ENCODE measurements at regions of chr7 and their contacts with region 1.

Region 1: GRCh38 chr7:106176414-106177299 is 64.5 kb upstream of the SYPL1 start:
- DNase-seq: peak; percentile 74
- ATAC-seq: peak; percentile 69
- H3K4me3 ChIP-seq: no peak overlapping the region
- H3K4me3 Mint-ChIP-seq: no peak overlapping the region
- H3K27ac ChIP-seq: no peak overlapping the region
- H3K27ac Mint-ChIP-seq: no peak overlapping the region
- H3K4me1 ChIP-seq: peaks cover 5 to 13% of the 10 kb centered on the region in 2 donors
- H3K4me1 Mint-ChIP-seq: peaks cover 11% of the 10 kb centered on the region
- H3K27me3 ChIP-seq: peaks cover 0 to 6% (median 5%) of the 10 kb centered on the region in 4 experiments
- H3K27me3 Mint-ChIP-seq: peaks cover 13% of the 10 kb centered on the region
- CTCF ChIP-seq: peak; percentile 96

Region 2: DNA sequence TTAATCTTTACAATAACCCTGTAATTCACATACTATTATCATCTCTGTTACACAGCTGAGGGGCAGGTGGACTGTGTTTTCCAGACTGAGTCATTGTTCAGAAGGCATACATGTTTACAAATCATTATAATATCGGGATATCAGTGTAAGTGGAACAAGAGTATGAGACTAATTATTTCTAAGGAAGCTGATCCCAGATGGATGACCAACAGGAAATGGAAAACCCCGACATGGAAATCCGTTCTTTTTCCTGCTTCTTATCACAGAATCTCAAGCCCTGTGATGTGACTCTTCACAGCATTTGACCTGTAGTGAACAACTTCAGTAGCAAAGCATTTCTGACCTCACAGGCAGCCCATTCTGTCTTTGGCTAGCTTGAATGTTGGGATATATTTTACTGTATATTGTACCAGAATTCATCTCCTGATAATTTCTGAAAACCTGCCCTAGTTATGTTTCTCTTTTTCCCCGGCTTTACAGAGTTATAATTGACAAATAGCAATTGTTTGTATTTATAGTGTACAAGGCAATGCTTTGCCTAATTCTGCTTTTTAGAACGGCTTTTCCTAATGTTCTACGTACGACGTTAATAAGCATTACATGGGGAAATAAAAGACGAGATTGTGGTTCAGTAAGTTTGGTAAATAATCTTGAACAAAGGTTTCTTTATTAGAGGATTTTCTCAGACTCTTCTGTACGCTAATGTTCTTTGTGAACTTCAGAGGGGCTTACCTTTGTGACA is 14.1 kb after region 1 on chr7:
- CTCF ChIA-PET with region 1: interaction called, 11 read pairs
- POLR2A ChIA-PET with region 1: no interaction called
- intact Hi-C with region 1: no loop called
- DNase-seq: no peak
- ATAC-seq: no peak
- H3K4me3 ChIP-seq: no peak overlapping the region
- H3K4me3 Mint-ChIP-seq: no peak overlapping the region
- H3K27ac ChIP-seq: no peak overlapping the region
- H3K27ac Mint-ChIP-seq: no peak overlapping the region
- H3K4me1 ChIP-seq: no peaks in the 10 kb centered on the region
- H3K4me1 Mint-ChIP-seq: no peaks in the 10 kb centered on the region
- H3K27me3 ChIP-seq: peaks cover 0 to 9% (median 3%) of the 10 kb centered on the region in 4 experiments
- H3K27me3 Mint-ChIP-seq: peaks cover 36% of the 10 kb centered on the region
- CTCF ChIP-seq: no peak

Region 3: GRCh38 chr7:106367018-106367420 is 190.4 kb after region 1 on chr7:
- CTCF ChIA-PET with region 1: interaction called, 5 read pairs
- POLR2A ChIA-PET with region 1: no interaction called
- intact Hi-C with region 1: loop called (anchors 1 kb)
- DNase-seq: peak; percentile 21
- ATAC-seq: peak; percentile 33
- H3K4me3 ChIP-seq: no peak overlapping the region
- H3K4me3 Mint-ChIP-seq: no peak overlapping the region
- H3K27ac ChIP-seq: no peak overlapping the region
- H3K27ac Mint-ChIP-seq: no peak overlapping the region
- H3K4me1 ChIP-seq: no peaks in the 10 kb centered on the region
- H3K4me1 Mint-ChIP-seq: no peaks in the 10 kb centered on the region
- H3K27me3 ChIP-seq: peaks cover 0 to 3% (median 1%) of the 10 kb centered on the region in 4 experiments
- H3K27me3 Mint-ChIP-seq: peaks cover 8% of the 10 kb centered on the region
- CTCF ChIP-seq: peak; percentile 37

Region 4: DNA sequence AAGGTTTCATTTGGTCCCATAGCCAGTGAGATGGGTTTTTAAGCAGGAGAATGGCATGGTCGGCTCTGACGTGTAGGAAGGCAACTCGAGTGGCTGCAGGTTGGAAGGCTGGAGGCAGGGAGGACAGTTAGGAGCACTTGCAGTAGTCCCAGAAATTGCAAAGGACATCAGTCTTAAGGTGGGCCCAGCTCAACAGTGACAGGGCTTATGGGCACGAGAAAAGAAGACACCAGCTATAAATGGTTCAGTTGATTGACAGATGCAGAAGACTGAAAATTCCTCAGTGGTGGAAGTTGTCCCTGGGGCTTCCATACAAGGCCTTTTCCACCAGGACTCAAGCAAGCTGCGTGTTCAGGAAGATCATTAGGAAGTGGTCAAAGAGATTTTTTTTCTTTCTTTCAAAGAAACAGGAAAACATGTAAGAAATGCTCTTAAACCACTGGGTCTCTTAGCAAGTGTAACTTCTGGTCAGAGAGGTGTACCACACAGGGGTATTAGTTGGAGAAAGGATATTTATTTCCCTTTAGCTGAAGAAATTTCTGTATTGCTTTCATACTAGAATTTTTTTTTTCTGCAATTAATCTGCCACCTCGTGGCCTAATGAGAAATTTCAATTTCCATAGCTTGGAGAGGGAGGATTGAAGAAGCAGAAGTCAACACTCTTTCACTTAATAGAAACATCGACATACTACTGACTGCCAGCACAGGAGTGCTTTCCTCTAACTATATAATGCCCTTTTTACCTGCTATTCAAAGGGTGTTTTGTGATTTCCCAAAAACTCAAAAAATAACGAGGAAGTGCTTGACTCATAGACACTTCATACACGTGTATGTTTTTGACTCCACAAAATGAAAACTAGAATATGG is 285.6 kb after region 1 on chr7:
- CTCF ChIA-PET with region 1: interaction called, 310 read pairs
- POLR2A ChIA-PET with region 1: interaction called, 9 read pairs
- intact Hi-C with region 1: no loop called
- DNase-seq: peak; percentile 58
- ATAC-seq: peak; percentile 49
- H3K4me3 ChIP-seq: no peak overlapping the region
- H3K4me3 Mint-ChIP-seq: no peak overlapping the region
- H3K27ac ChIP-seq: no peak overlapping the region
- H3K27ac Mint-ChIP-seq: no peak overlapping the region
- H3K4me1 ChIP-seq: peaks cover 11 to 23% of the 10 kb centered on the region in 2 donors
- H3K4me1 Mint-ChIP-seq: peaks cover 15% of the 10 kb centered on the region
- H3K27me3 ChIP-seq: no peaks in the 10 kb centered on the region
- H3K27me3 Mint-ChIP-seq: no peaks in the 10 kb centered on the region
- CTCF ChIP-seq: peak; percentile 70

Region 5: DNA sequence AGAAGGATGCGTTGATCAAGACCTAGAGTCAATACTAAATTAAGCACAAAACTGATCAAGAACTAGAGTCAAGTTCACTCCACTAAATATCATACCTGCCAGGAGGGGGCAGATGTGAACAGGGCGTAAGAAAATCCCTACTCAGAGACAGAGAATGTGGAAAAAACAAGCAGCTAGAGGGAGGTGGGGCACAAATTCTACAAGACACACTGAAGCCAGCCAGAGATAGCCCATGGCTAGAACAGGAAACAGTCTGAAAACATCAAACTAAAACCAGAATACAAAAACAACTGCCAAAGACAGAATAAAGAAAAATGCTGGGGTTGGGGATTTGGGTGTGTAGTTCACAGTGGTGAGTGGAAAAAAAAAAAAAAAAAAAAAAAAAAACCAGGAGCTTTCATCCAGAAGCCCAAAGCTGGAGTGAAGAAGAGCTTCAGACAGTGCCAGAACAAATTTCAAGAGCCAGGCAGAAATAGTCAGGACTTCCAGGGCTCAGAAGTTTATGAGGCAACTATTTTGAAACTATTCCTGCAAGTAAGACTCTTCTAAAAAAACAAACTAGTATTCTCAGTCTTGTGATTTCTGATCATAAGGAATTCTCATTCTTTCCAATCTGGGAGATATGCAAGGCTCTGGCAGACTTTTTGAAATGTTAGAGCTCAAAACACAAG is 366.0 kb after region 1 on chr7:
- CTCF ChIA-PET with region 1: interaction called, 8 read pairs
- POLR2A ChIA-PET with region 1: no interaction called
- intact Hi-C with region 1: loop called (anchors 2 kb)
- DNase-seq: peak; percentile 71
- ATAC-seq: peak; percentile 84
- H3K4me3 ChIP-seq: no peak overlapping the region
- H3K4me3 Mint-ChIP-seq: no peak overlapping the region
- H3K27ac ChIP-seq: no peak overlapping the region
- H3K27ac Mint-ChIP-seq: no peak overlapping the region
- H3K4me1 ChIP-seq: peaks cover 0 to 3% of the 10 kb centered on the region in 2 donors
- H3K4me1 Mint-ChIP-seq: peaks cover 4% of the 10 kb centered on the region
- H3K27me3 ChIP-seq: no peaks in the 10 kb centered on the region
- H3K27me3 Mint-ChIP-seq: peaks cover 3% of the 10 kb centered on the region
- CTCF ChIP-seq: peak; percentile 78